Heart left ventricle (tissue), 16 donors: ENCODE measurements at regions of chr3 and their contacts with region 1.

Region 1: GRCh38 chr3:126083913-126084767 is at the start of gene SLC41A3:
- DNase-seq: peak; percentile 92 to 95 (median 94)
- ATAC-seq: peak; percentile 97 to 99 (median 98)
- H3K4me3 ChIP-seq: peak within 1 kb of the TSS; percentile 49 to 97 (median 81)
- H3K27ac ChIP-seq: peak within 1 kb of the TSS; percentile 45 to 97 (median 89)
- H3K4me1 ChIP-seq: peaks cover 0 to 25% (median 11%) of the 10 kb centered on the region in 12 donors
- H3K27me3 ChIP-seq: no peaks in the 10 kb centered on the region
- CTCF ChIP-seq: peak; percentile 9 to 57 (median 34)
- POLR2A ChIP-seq: peak in 1 of 2 donors; percentile 78
- total RNA-seq, gene SLC41A3: 33.3 to 57.6 (median 46.4) TPM

Region 2: GRCh38 chr3:125967138-125967537 is 117.0 kb before region 1 on chr3:
- intact Hi-C with region 1: loop called in 3 of 10 experiments (anchors 5 to 10 kb)
- DNase-seq: no peak
- ATAC-seq: no peak
- H3K4me3 ChIP-seq: no peak overlapping the region
- H3K27ac ChIP-seq: no peak overlapping the region
- H3K4me1 ChIP-seq: peaks cover 0 to 6% (median 2%) of the 10 kb centered on the region in 12 donors
- H3K27me3 ChIP-seq: peaks cover 0 to 31% (median 6%) of the 10 kb centered on the region in 9 donors
- CTCF ChIP-seq: no peak
- POLR2A ChIP-seq: no peak

Region 3: DNA sequence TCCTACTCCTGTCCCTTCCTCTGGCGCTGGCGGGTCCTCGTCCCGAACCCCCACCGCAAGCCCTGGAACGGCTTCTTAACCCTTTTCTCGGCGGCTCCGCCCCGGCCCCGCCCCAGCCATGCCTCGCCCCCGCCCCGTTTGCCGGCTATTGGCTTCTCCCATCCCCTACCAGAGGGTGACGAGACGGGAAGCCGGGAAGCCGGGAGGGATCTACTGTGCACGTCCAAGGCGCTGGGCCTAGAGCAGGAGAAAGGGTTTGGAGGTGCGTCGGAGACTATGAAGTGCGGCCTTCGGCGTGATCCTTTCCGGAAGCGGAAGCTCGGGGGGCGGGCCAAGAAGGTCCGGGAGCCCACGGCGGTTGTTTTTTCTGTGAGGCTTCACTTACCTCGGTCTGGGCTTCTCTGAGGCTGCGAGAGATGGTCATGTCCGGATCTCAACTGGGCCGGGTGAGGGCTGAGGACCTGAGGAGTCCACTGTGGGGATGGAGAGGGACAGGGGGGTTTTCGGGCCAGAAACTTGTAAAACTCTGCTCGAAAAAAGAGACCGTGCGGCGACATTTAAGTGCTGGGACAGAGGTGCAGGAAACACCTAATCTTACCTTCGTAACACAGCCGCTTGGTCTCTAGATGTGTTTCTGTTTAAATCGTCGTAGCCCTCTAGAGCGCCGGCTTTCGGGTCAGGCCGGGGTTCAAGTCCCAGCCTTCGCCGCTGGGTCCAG is 93.7 kb before region 1 on chr3:
- intact Hi-C with region 1: loop called in 4 of 10 experiments (anchors 5 to 10 kb)
- DNase-seq: peak; percentile 89 to 96 (median 93)
- ATAC-seq: peak; percentile 94 to 100 (median 100)
- H3K4me3 ChIP-seq: peak overlapping the region; percentile 30 to 94 (median 60)
- H3K27ac ChIP-seq: peak overlapping the region in 10 of 12 donors; percentile 16 to 85 (median 80)
- H3K4me1 ChIP-seq: peaks cover 0 to 15% (median 5%) of the 10 kb centered on the region in 12 donors
- H3K27me3 ChIP-seq: no peaks in the 10 kb centered on the region
- CTCF ChIP-seq: no peak
- POLR2A ChIP-seq: peak in 1 of 2 donors; percentile 48